CD4-positive, alpha-beta memory T cell (primary cell): ENCODE measurements at regions of chr1 and their contacts with region 1.

Region 1: DNA sequence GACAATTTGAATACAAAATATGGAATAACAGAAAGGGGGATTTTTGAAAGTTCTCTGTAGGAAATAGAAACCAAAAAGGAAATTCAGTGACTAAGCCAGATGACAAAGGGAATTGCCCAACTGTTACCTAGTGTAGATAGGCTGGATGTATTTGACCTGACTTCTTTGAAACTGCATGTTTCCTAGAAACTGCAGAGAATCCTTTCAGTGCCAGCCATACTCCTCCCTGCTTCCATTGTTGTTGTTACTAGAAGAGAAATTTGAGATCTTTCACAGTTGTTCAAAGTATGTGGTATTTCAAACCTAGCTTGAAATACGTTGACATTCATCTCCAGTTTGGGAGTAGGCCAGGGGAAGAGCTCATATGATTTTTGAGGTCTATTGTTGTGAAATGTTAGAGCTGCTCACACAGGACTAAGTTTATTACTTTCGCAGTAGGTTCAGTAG is 1.8 kb upstream of the GBP5 start:
- DNase-seq: peak; percentile 43 to 63 (median 49)
- H3K4me3 ChIP-seq: peak overlapping the region in 1 of 2 donors; percentile 29
- H3K4me3 Mint-ChIP-seq: peak overlapping the region; percentile 78 to 90 (median 88)
- H3K27ac ChIP-seq: peak overlapping the region; percentile 74
- H3K27ac Mint-ChIP-seq: peak overlapping the region; percentile 93 to 99 (median 98)
- H3K4me1 ChIP-seq: peaks cover 68% of the 10 kb centered on the region
- H3K4me1 Mint-ChIP-seq: peaks cover 46 to 91% (median 62%) of the 10 kb centered on the region in 4 donors
- H3K27me3 ChIP-seq: no peaks in the 10 kb centered on the region
- H3K27me3 Mint-ChIP-seq: no peaks in the 10 kb centered on the region

Region 2: DNA sequence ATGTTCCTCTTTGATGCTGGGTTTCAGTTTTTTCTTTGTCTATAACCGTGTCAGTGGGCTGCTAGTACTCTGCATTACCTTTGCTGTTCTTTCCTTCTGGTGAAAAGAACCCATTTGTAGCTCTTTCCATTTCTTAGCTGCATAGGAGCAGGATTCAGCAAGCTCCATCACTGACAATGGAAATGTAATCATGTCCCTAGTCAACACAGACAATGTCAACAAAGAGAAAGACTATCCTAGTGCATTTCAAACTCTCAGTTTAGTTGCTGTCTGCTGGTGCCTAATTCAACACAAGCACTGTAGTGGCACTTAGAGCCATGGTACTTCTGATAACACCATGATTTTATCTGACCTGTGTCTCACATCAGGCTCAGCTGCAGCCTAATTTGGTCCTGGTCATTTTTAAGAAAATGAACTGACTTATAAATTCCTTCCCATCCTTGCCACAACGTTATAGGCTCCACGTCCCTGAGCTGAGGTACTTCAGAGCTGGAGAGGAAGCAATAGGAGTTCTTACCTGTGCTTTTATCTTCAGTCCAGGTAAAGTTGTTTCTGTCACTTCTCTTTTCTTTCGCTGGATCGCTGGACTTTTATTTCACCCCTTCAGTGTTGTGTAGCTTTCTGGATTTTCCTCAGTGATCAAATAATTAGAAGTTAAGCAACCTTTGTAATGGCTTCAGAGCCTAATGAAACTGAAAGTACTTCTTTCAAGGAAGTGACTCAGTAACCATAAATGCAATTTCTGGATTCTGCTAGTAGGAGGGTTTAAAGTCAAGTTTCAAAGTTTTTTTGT is 252.1 kb before region 1 on chr1 and contains the start of gene GBP3:
- CTCF ChIA-PET with region 1: interaction called, 4 read pairs
- POLR2A ChIA-PET with region 1: interaction called, 13 read pairs
- intact Hi-C with region 1: no loop called
- DNase-seq: peak in 4 of 5 donors; percentile 39 to 56 (median 45)
- H3K4me3 ChIP-seq: peak within 1 kb of the TSS; percentile 49 to 87
- H3K4me3 Mint-ChIP-seq: peak within 1 kb of the TSS; percentile 90 to 100 (median 95)
- H3K27ac ChIP-seq: peak within 1 kb of the TSS; percentile 73
- H3K27ac Mint-ChIP-seq: peak within 1 kb of the TSS; percentile 84 to 99 (median 94)
- H3K4me1 ChIP-seq: peaks cover 39% of the 10 kb centered on the region
- H3K4me1 Mint-ChIP-seq: peaks cover 29 to 69% (median 45%) of the 10 kb centered on the region in 4 donors
- H3K27me3 ChIP-seq: no peaks in the 10 kb centered on the region
- H3K27me3 Mint-ChIP-seq: no peaks in the 10 kb centered on the region
- total RNA-seq, gene GBP3: 51.8 to 54.1 TPM

Region 3: GRCh38 chr1:89125913-89126580 is 148.4 kb before region 1 on chr1 and contains the start of gene GBP2:
- CTCF ChIA-PET with region 1: no interaction called
- POLR2A ChIA-PET with region 1: interaction called, 4 read pairs
- intact Hi-C with region 1: loop called (anchors 1 kb)
- DNase-seq: peak; percentile 34 to 54 (median 43)
- H3K4me3 ChIP-seq: peak within 1 kb of the TSS; percentile 75 to 83
- H3K4me3 Mint-ChIP-seq: peak within 1 kb of the TSS; percentile 97 to 100 (median 100)
- H3K27ac ChIP-seq: peak within 1 kb of the TSS; percentile 80
- H3K27ac Mint-ChIP-seq: peak within 1 kb of the TSS; percentile 93 to 100 (median 99)
- H3K4me1 ChIP-seq: peaks cover 52% of the 10 kb centered on the region
- H3K4me1 Mint-ChIP-seq: peaks cover 40 to 77% (median 55%) of the 10 kb centered on the region in 4 donors
- H3K27me3 ChIP-seq: no peaks in the 10 kb centered on the region
- H3K27me3 Mint-ChIP-seq: no peaks in the 10 kb centered on the region
- total RNA-seq, gene GBP2: 186 to 199 TPM

Region 4: GRCh38 chr1:89286549-89287180 is 12.2 kb after region 1 on chr1:
- CTCF ChIA-PET with region 1: interaction called, 12 read pairs
- POLR2A ChIA-PET with region 1: interaction called, 86 read pairs
- intact Hi-C with region 1: loop called (anchors 1 kb)
- DNase-seq: peak in 4 of 5 donors; percentile 39 to 58 (median 46)
- H3K4me3 ChIP-seq: peak overlapping the region; percentile 14 to 21
- H3K4me3 Mint-ChIP-seq: peak overlapping the region; percentile 45 to 78 (median 76)
- H3K27ac ChIP-seq: peak overlapping the region; percentile 61
- H3K27ac Mint-ChIP-seq: peak overlapping the region; percentile 83 to 96 (median 94)
- H3K4me1 ChIP-seq: peaks cover 67% of the 10 kb centered on the region
- H3K4me1 Mint-ChIP-seq: peaks cover 60 to 76% (median 69%) of the 10 kb centered on the region in 4 donors
- H3K27me3 ChIP-seq: no peaks in the 10 kb centered on the region
- H3K27me3 Mint-ChIP-seq: no peaks in the 10 kb centered on the region

Region 5: GRCh38 chr1:89454845-89455521 is 180.5 kb after region 1 on chr1:
- CTCF ChIA-PET with region 1: interaction called, 12 read pairs
- POLR2A ChIA-PET with region 1: no interaction called
- intact Hi-C with region 1: loop called (anchors 1 kb)
- DNase-seq: peak; percentile 67 to 73 (median 69)
- H3K4me3 ChIP-seq: no peak overlapping the region
- H3K4me3 Mint-ChIP-seq: no peak overlapping the region
- H3K27ac ChIP-seq: no peak overlapping the region
- H3K27ac Mint-ChIP-seq: peak overlapping the region in 2 of 7 donors; percentile 48 to 68
- H3K4me1 ChIP-seq: peaks cover 11% of the 10 kb centered on the region
- H3K4me1 Mint-ChIP-seq: peaks cover 9 to 14% (median 12%) of the 10 kb centered on the region in 4 donors
- H3K27me3 ChIP-seq: no peaks in the 10 kb centered on the region
- H3K27me3 Mint-ChIP-seq: peaks cover 1 to 2% of the 10 kb centered on the region in 2 donors